Gastrocnemius medialis (tissue), 4 donors: ENCODE measurements at regions of chrX and their contacts with region 1.

Region 1: DNA sequence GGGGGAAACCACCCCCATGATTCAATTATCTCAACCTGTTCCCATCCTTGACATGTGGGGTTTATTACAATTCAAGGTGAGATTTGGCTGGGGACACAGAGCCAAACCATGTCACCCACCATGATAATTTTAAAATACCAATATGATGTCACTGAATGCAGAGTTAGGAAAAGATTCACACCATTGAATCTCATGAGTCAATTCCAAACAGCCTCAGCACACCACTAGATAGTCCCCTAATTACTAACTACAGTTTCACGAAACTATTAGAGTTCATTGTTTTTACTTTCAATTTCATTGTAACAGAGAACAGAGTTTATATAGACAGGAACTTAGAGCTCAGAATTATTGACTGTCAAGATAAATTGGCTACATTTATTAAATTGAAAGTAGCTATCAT is 410.2 kb downstream of the FAM47A start:
- DNase-seq: no peak
- ATAC-seq: no peak
- H3K4me3 ChIP-seq: no peak overlapping the region
- H3K27ac ChIP-seq: no peak overlapping the region
- H3K4me1 ChIP-seq: no peaks in the 10 kb centered on the region
- H3K27me3 ChIP-seq: no peaks in the 10 kb centered on the region
- CTCF ChIP-seq: no peak
- POLR2A ChIP-seq: no peak

Region 2: DNA sequence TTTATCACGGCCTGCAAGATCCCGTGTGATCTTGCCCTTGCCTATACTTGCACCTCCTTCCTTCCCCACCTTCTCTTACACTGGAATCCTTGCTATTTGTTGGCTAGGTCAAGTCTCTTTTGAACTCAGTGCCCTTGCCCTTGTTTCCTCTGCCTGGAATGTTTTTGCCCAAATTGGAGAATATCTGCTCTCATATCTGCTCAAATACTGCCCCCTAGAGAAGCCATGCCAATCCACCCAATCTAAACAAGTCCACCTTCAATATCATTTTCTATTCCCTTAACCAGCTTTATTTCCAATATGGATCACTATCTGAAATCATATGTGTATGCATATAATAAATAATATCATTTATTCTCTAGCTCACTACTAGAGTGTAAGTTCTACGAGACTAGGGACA is 1605.9 kb before region 1 on chrX:
- in situ Hi-C with region 1: no loop called
- intact Hi-C with region 1: loop called (anchors 5 kb)
- DNase-seq: no peak
- ATAC-seq: no peak
- H3K4me3 ChIP-seq: no peak overlapping the region
- H3K27ac ChIP-seq: no peak overlapping the region
- H3K4me1 ChIP-seq: no peaks in the 10 kb centered on the region
- H3K27me3 ChIP-seq: no peaks in the 10 kb centered on the region
- CTCF ChIP-seq: no peak
- POLR2A ChIP-seq: no peak